ENCODE measurements at regions of chr1 and their contacts with region 1.

Region 1: GRCh38 chr1:67685067-67685557 is at the start of gene GADD45A:
- DNase-seq: peak; percentile 90 to 99 (median 93)
- ATAC-seq: peak; percentile 80
- H3K4me3 ChIP-seq: peak within 1 kb of the TSS; percentile 93
- H3K27ac ChIP-seq: peak within 1 kb of the TSS; percentile 95
- H3K4me1 ChIP-seq: peaks cover 18 to 33% of the 10 kb centered on the region in 2 experiments; a peak in 4 of 5 replicates
- H3K27me3 ChIP-seq: no peaks in the 10 kb centered on the region
- CTCF ChIP-seq: no peak
- EP300 ChIP-seq: no peak; the same call in 1 of the 2 replicates
- POLR2A ChIP-seq: peak; percentile 99
- RAD21 ChIP-seq: peak in 1 of 2 experiments; percentile 24; a peak in 2 of 4 replicates
- polyA plus RNA-seq, gene GADD45A: 21.3 to 22.4 TPM

Region 2: GRCh38 chr1:67535474-67535873 is 149.6 kb before region 1 on chr1:
- CTCF ChIA-PET with region 1: no interaction called
- POLR2A ChIA-PET with region 1: interaction called, 23 read pairs
- in situ Hi-C with region 1: no loop called
- intact Hi-C with region 1: loop called (anchors 1 kb)
- DNase-seq: peak; percentile 71 to 87 (median 75)
- ATAC-seq: peak; percentile 83
- H3K4me3 ChIP-seq: no peak overlapping the region
- H3K27ac ChIP-seq: no peak overlapping the region
- H3K4me1 ChIP-seq: peaks cover 14 to 18% of the 10 kb centered on the region in 2 experiments; a peak in 4 of 5 replicates
- H3K27me3 ChIP-seq: no peaks in the 10 kb centered on the region
- CTCF ChIP-seq: peak; percentile 93 to 99 (median 96)
- EP300 ChIP-seq: 0 out of 2 replicates have a peak, but pooled peaks have one; percentile 35
- POLR2A ChIP-seq: no peak
- RAD21 ChIP-seq: peak; percentile 88 to 97

Region 3: GRCh38 chr1:67570473-67571143 is 114.5 kb before region 1 on chr1:
- CTCF ChIA-PET with region 1: interaction called, 3 read pairs
- POLR2A ChIA-PET with region 1: interaction called, 16 read pairs
- in situ Hi-C with region 1: no loop called
- intact Hi-C with region 1: no loop called
- DNase-seq: peak; percentile 54 to 72 (median 62)
- ATAC-seq: peak; percentile 87
- H3K4me3 ChIP-seq: no peak overlapping the region
- H3K27ac ChIP-seq: no peak overlapping the region; the same call in 2 of the 3 replicates
- H3K4me1 ChIP-seq: peaks cover 0 to 20% of the 10 kb centered on the region in 2 experiments; a peak in 3 of 5 replicates
- H3K27me3 ChIP-seq: no peaks in the 10 kb centered on the region
- CTCF ChIP-seq: no peak
- EP300 ChIP-seq: peak; percentile 61
- POLR2A ChIP-seq: no peak
- RAD21 ChIP-seq: 0 out of 4 replicates have a peak, but pooled peaks of 1 of the 2 experiments have one; percentile 16

Region 4: GRCh38 chr1:67674260-67675011 is 10.7 kb before region 1 on chr1:
- CTCF ChIA-PET with region 1: no interaction called
- POLR2A ChIA-PET with region 1: interaction called, 62 read pairs
- in situ Hi-C with region 1: no loop called
- intact Hi-C with region 1: no loop called
- DNase-seq: no peak
- ATAC-seq: peak; percentile 69
- H3K4me3 ChIP-seq: no peak overlapping the region
- H3K27ac ChIP-seq: no peak overlapping the region; the same call in 2 of the 3 replicates
- H3K4me1 ChIP-seq: peaks cover 3 to 9% of the 10 kb centered on the region in 2 experiments; a peak in 2 of 5 replicates
- H3K27me3 ChIP-seq: no peaks in the 10 kb centered on the region
- CTCF ChIP-seq: no peak
- EP300 ChIP-seq: no peak
- POLR2A ChIP-seq: no peak
- RAD21 ChIP-seq: no peak

Region 5: GRCh38 chr1:67735806-67736627 is 50.9 kb after region 1 on chr1:
- CTCF ChIA-PET with region 1: no interaction called
- POLR2A ChIA-PET with region 1: interaction called, 27 read pairs
- in situ Hi-C with region 1: no loop called
- intact Hi-C with region 1: loop called (anchors 1 kb)
- DNase-seq: peak in 3 of 4 experiments; percentile 56 to 70 (median 66)
- ATAC-seq: no peak
- H3K4me3 ChIP-seq: no peak overlapping the region
- H3K27ac ChIP-seq: peak overlapping the region; percentile 72
- H3K4me1 ChIP-seq: peaks cover 43 to 72% of the 10 kb centered on the region in 2 experiments
- H3K27me3 ChIP-seq: no peaks in the 10 kb centered on the region
- CTCF ChIP-seq: no peak
- EP300 ChIP-seq: peak; percentile 4; the same call in 1 of the 2 replicates
- POLR2A ChIP-seq: no peak
- RAD21 ChIP-seq: no peak